ENCODE measurements at regions of chr21 and their contacts with region 1.

Region 1: DNA sequence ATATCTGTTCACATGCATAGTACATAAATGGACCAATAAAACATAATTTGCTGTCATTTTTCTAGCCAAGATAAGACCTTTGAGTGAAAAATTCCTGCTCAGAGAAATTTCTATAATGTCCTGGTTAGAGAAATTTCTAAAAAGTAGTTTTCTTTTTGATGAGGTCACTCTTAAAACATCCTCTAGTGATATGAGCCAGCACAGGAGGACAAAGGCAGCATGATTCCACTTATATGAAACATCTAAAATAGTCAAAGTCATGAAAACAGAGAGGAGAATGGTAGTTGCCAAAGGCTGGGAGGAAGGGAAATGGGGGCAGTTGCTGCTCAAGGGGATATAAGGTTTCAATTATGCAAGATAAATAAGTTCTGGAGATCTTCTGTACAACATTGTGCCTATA is 239.4 kb downstream of the BACH1 start:
- DNase-seq: no peak
- H3K4me3 ChIP-seq: no peak overlapping the region
- H3K27ac ChIP-seq: no peak overlapping the region
- H3K4me1 ChIP-seq: peaks cover 2% of the 10 kb centered on the region
- H3K27me3 ChIP-seq: no peaks in the 10 kb centered on the region
- CTCF ChIP-seq: no peak
- EP300 ChIP-seq: no peak
- POLR2A ChIP-seq: no peak

Region 2: GRCh38 chr21:29487154-29487553 is 51.0 kb before region 1 on chr21:
- intact Hi-C with region 1: no loop called
- DNase-seq: no peak
- H3K4me3 ChIP-seq: no peak overlapping the region
- H3K27ac ChIP-seq: no peak overlapping the region
- H3K4me1 ChIP-seq: peaks cover 2% of the 10 kb centered on the region
- H3K27me3 ChIP-seq: no peaks in the 10 kb centered on the region
- CTCF ChIP-seq: no peak
- EP300 ChIP-seq: no peak
- POLR2A ChIP-seq: no peak

Region 3: GRCh38 chr21:29571949-29572348 is 33.8 kb after region 1 on chr21:
- intact Hi-C with region 1: no loop called
- DNase-seq: no peak
- H3K4me3 ChIP-seq: no peak overlapping the region
- H3K27ac ChIP-seq: no peak overlapping the region
- H3K4me1 ChIP-seq: peaks cover 2% of the 10 kb centered on the region
- H3K27me3 ChIP-seq: no peaks in the 10 kb centered on the region
- CTCF ChIP-seq: no peak
- EP300 ChIP-seq: no peak
- POLR2A ChIP-seq: no peak

Region 4: GRCh38 chr21:29829564-29830275 is 291.6 kb after region 1 on chr21:
- intact Hi-C with region 1: no loop called
- DNase-seq: no peak
- H3K4me3 ChIP-seq: no peak overlapping the region
- H3K27ac ChIP-seq: no peak overlapping the region
- H3K4me1 ChIP-seq: no peaks in the 10 kb centered on the region
- H3K27me3 ChIP-seq: no peaks in the 10 kb centered on the region
- CTCF ChIP-seq: no peak
- EP300 ChIP-seq: no peak
- POLR2A ChIP-seq: no peak

Region 5: DNA sequence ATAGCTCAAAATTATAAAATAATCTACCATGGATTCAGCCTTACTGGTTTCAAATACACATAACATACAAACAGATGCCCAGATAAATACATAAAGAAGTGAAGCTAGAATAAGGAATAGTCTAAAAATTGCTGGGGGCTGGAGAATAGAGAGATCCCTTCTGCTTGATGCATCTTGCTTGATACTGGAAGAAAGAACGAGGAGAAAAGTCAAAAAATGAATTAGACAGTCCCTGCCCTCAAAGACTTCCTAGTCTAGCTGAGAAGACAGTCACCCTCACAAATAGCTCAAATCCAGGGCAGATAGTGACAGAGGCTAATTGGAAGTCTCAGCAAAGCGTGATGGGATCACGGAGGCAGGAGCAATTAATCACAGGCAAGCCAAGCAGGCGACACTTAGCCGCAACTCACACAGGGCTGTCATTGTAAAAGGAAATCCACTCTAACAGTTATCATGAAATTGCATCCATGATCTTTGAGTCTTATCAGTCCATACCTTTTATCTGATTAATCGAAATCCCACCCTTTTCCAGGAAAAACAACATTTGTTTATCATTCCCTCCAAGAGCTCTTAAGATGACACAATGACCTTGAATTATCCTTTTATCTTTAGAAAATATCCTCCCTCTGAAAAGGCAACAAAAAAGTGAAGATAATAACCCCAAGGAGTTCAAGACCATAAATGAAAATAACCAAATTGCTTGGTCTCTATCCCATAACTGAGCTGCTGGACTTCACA is 1865.7 kb after region 1 on chr21:
- intact Hi-C with region 1: loop called in 1 of 4 experiments (anchors 5 kb)
- DNase-seq: no peak
- H3K4me3 ChIP-seq: no peak overlapping the region
- H3K27ac ChIP-seq: no peak overlapping the region
- H3K4me1 ChIP-seq: peaks cover 2% of the 10 kb centered on the region
- H3K27me3 ChIP-seq: no peaks in the 10 kb centered on the region
- CTCF ChIP-seq: no peak
- EP300 ChIP-seq: no peak
- POLR2A ChIP-seq: no peak

Measured in ovary (tissue), 10 donors.